ENCODE measurements at regions of chr17 and their contacts with region 1.

Region 1: GRCh38 chr17:82385559-82386254 is 14.1 kb downstream of the UTS2R start:
- DNase-seq: no peak
- H3K4me3 ChIP-seq: no peak overlapping the region
- H3K27ac ChIP-seq: no peak overlapping the region
- H3K4me1 ChIP-seq: no peaks in the 10 kb centered on the region
- H3K27me3 ChIP-seq: no peaks in the 10 kb centered on the region
- CTCF ChIP-seq: no peak

Region 2: GRCh38 chr17:82320956-82321927 is 64.5 kb before region 1 on chr17:
- CTCF ChIA-PET with region 1: no interaction called
- POLR2A ChIA-PET with region 1: no interaction called
- intact Hi-C with region 1: no loop called
- DNase-seq: no peak
- H3K4me3 ChIP-seq: no peak overlapping the region
- H3K27ac ChIP-seq: no peak overlapping the region
- H3K4me1 ChIP-seq: no peaks in the 10 kb centered on the region
- H3K27me3 ChIP-seq: no peaks in the 10 kb centered on the region
- CTCF ChIP-seq: peak; percentile 79

Region 3: DNA sequence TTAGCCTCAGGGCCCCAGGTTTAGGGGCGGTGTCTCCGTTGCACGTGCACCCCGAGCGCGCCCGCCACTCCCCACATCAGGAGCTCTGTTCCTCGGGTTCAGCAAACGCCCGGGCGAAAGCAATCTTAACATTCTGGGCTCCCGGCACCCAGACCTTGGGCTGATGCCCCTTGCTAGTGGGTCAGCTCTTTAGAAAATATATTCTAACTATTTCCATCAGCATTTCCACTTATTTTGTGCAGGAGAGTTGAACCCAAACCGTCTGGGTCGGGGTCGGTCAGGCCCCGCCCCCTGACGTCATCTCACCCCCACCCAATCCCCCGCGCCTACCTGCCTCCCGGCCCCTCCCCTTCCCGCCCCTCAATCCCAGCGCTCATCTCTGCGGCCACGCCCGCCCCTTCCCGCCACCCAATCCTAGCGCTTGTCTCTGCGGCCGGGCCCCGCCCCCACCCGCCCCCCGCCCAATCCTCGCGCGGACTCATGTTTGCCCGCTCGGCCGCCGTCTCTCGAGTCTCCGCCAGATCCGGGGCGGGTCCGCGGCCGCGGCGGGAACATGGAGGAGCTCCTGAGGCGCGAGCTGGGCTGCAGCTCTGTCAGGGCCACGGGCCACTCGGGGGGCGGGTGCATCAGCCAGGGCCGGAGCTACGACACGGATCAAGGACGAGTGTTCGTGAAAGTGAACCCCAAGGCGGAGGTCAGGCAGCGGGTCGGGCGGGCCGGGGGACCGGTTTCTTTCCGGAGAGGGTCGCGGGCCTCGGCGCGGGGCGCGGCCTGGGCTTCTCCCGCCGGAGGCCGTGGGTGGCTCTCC is 330.7 kb after region 1 on chr17 and contains the start of gene FN3KRP:
- CTCF ChIA-PET with region 1: no interaction called
- POLR2A ChIA-PET with region 1: interaction called, 10 read pairs
- intact Hi-C with region 1: no loop called
- DNase-seq: peak; percentile 95
- H3K4me3 ChIP-seq: peak within 1 kb of the TSS; percentile 98
- H3K27ac ChIP-seq: peak within 1 kb of the TSS; percentile 89
- H3K4me1 ChIP-seq: peaks cover 13% of the 10 kb centered on the region
- H3K27me3 ChIP-seq: no peaks in the 10 kb centered on the region
- CTCF ChIP-seq: no peak
- total RNA-seq, gene FN3KRP: 35.4 and 43.2 TPM in 2 replicates

Measured in A673 (cell line).